ENCODE measurements at regions of chr2 and their contacts with region 1.

Region 1: GRCh38 chr2:73926493-73927338 is at the start of gene DGUOK:
- DNase-seq: peak; percentile 98
- H3K4me3 ChIP-seq: peak within 1 kb of the TSS; percentile 48 to 95 (median 91)
- H3K27ac ChIP-seq: peak within 1 kb of the TSS; percentile 98
- H3K4me1 ChIP-seq: peaks cover 13% of the 10 kb centered on the region
- H3K27me3 ChIP-seq: peaks cover 8 to 9% of the 10 kb centered on the region in 2 experiments
- CTCF ChIP-seq: no peak
- POLR2A ChIP-seq: peak; percentile 84
- total RNA-seq, gene DGUOK: 51.8 and 58.8 TPM in 2 replicates

Region 2: GRCh38 chr2:73963385-73964120 is 36.8 kb after region 1 on chr2:
- CTCF ChIA-PET with region 1: no interaction called
- POLR2A ChIA-PET with region 1: no interaction called
- dilution Hi-C with region 1: no loop called
- intact Hi-C with region 1: no loop called
- DNase-seq: no peak
- H3K4me3 ChIP-seq: no peak overlapping the region
- H3K27ac ChIP-seq: no peak overlapping the region
- H3K4me1 ChIP-seq: no peaks in the 10 kb centered on the region
- H3K27me3 ChIP-seq: no peaks in the 10 kb centered on the region
- CTCF ChIP-seq: no peak
- POLR2A ChIP-seq: no peak

Region 3: DNA sequence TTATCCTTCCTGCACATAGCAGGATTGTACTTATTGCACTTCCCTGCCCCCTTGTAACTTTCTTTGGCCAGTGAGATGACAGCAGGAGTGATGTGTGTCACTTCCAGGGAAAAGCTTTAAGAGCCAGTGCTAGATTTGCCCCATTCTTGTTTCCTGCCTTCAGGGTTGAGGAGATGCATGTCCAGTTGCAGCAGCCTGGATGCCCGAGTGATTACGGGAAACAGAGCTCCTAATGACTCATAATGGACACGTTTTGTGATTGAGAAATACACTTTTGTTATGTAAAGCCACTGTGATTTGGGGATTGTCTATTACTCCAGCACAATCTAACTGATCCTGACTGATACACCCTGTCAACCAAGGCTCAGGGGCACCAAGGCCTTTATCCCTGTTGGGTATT is 53.0 kb after region 1 on chr2:
- CTCF ChIA-PET with region 1: no interaction called
- POLR2A ChIA-PET with region 1: no interaction called
- dilution Hi-C with region 1: no loop called
- intact Hi-C with region 1: loop called (anchors 1 kb)
- DNase-seq: peak; percentile 63
- H3K4me3 ChIP-seq: no peak overlapping the region
- H3K27ac ChIP-seq: no peak overlapping the region
- H3K4me1 ChIP-seq: peaks cover 29% of the 10 kb centered on the region
- H3K27me3 ChIP-seq: no peaks in the 10 kb centered on the region
- CTCF ChIP-seq: no peak
- POLR2A ChIP-seq: no peak

Region 4: GRCh38 chr2:73985308-73986084 is 58.8 kb after region 1 on chr2:
- CTCF ChIA-PET with region 1: interaction called, 4 read pairs
- POLR2A ChIA-PET with region 1: no interaction called
- dilution Hi-C with region 1: no loop called
- intact Hi-C with region 1: loop called (anchors 2 kb)
- DNase-seq: no peak
- H3K4me3 ChIP-seq: peak overlapping the region; percentile 44 to 69 (median 66)
- H3K27ac ChIP-seq: peak overlapping the region; percentile 49
- H3K4me1 ChIP-seq: peaks cover 39% of the 10 kb centered on the region
- H3K27me3 ChIP-seq: no peaks in the 10 kb centered on the region
- CTCF ChIP-seq: no peak
- POLR2A ChIP-seq: no peak

Region 5: DNA sequence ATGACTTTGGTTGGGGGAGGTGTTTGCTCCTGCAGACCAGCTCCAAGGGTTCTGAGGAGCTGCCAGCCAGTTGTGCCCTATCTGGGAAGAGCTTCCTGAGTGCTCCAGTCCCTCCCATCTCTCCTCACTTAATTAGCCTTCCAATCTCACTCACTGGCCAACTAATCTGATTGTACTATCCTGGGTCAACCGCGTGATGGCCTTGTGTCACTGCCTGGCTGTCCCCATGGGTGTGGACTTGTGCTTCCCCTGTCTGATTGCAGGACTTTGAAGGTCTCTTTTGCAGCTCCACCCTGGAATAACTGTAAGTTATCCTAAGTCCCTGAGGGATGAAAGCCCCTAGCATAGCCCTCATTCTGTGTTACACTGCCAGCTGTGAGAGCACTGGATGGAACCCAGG is 351.5 kb after region 1 on chr2:
- CTCF ChIA-PET with region 1: no interaction called
- POLR2A ChIA-PET with region 1: no interaction called
- dilution Hi-C with region 1: no loop called
- intact Hi-C with region 1: no loop called
- DNase-seq: no peak
- H3K4me3 ChIP-seq: no peak overlapping the region
- H3K27ac ChIP-seq: no peak overlapping the region
- H3K4me1 ChIP-seq: no peaks in the 10 kb centered on the region
- H3K27me3 ChIP-seq: peaks cover 7 to 10% of the 10 kb centered on the region in 2 experiments
- CTCF ChIP-seq: no peak
- POLR2A ChIP-seq: no peak

Region 6: DNA sequence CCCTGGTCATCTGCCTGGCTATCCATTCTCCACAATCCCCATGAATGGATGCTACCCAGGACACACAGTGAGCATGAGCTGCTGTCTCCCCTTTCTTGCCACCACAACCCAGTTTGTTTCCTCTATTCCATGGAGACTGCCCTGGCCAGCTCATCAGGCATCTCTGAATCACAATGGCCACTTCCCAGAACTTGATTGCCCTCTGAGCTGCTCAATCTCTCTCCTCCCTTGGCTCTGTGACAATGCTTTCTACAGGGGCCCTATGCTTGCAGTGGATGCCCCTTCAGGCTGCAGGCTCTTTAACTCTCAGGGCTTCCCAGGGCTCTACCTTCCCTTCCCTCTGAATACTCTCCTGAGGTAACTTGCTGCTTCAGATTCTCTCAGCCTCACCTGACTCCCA is 430.9 kb after region 1 on chr2:
- CTCF ChIA-PET with region 1: no interaction called
- POLR2A ChIA-PET with region 1: no interaction called
- dilution Hi-C with region 1: no loop called
- intact Hi-C with region 1: no loop called
- DNase-seq: no peak
- H3K4me3 ChIP-seq: no peak overlapping the region
- H3K27ac ChIP-seq: no peak overlapping the region
- H3K4me1 ChIP-seq: no peaks in the 10 kb centered on the region
- H3K27me3 ChIP-seq: no peaks in the 10 kb centered on the region
- CTCF ChIP-seq: no peak
- POLR2A ChIP-seq: no peak

Region 7: DNA sequence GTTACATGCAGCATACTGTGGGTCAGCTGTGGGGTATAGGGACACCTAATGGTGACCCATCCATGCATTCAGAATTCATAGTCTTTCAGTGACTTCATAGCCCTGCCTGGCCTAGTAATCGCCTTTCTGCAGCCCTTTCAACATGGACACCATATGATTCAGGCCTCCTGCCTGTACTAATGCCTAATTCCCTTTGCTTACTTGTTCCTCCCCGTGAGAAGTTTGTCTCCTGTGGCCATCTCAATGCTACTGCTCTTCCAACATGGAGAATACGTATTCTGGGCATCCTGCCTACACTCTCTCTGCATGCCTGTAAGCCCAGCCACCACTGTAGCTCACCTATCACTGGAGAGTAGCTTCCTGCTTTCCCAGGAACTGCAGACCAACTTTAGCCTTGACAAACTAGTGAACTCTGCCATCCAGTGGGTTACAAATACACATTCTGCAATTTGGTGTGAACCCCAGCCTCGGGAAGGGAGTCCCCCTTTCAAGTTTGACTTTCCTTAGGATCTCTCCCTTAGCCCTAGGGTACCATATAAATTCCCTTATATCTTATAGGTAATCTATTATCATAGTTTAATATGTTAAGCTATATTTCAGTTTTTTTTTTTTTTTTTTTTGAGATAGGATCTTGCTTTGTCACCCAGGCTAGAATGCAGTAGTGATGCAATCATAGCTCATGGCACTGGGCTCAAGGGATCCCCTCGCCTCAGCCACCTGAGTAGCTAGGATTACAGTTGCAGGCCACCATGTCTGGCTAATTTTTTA is 699.1 kb after region 1 on chr2:
- CTCF ChIA-PET with region 1: no interaction called
- POLR2A ChIA-PET with region 1: no interaction called
- dilution Hi-C with region 1: no loop called
- intact Hi-C with region 1: no loop called
- DNase-seq: no peak
- H3K4me3 ChIP-seq: no peak overlapping the region
- H3K27ac ChIP-seq: no peak overlapping the region
- H3K4me1 ChIP-seq: no peaks in the 10 kb centered on the region
- H3K27me3 ChIP-seq: peaks cover 3 to 4% of the 10 kb centered on the region in 2 experiments
- CTCF ChIP-seq: no peak
- POLR2A ChIP-seq: no peak